ENCODE measurements at regions of chr4 and their contacts with region 1.

Region 1: GRCh38 chr4:124334119-124334518 is 378.4 kb downstream of the ANKRD50 start:
- DNase-seq: peak in 1 of 10 donors; percentile 19

Region 2: GRCh38 chr4:125244848-125245450 is 910.8 kb after region 1 on chr4:
- intact Hi-C with region 1: loop called (anchors 1 kb)
- DNase-seq: no peak

Region 3: DNA sequence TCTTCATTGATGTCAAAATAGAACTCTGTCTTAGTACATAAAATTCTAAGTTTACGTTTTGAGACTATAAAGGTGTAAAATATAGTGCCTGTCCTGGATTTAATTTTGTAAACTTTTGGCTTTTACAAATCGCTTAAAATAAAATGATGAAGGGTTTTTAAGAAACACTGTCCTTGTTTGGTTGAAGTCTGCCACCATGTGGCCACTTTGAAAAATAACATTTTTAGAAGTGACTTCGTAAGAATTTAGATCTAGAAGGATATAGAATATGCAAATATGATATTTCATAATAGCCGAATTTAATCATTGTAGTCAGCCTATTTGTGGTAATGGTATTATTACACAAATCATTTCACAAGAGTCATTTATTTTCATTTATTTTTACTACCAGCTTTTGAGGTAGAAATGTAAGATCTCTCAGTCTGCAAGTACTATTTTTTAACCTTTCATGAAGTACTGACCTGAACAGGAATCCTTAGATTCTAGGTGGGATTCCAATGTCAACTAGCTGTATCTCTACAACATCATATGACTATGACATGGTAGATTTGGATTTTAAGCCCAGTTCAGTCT is 949.7 kb after region 1 on chr4:
- intact Hi-C with region 1: loop called (anchors 1 kb)
- DNase-seq: peak in 1 of 10 donors; percentile 11

Measured in posterior cingulate gyrus (tissue), 11 donors.